Gastrocnemius medialis (tissue), 4 donors: ENCODE measurements at regions of chr10 and their contacts with region 1.

Region 1: DNA sequence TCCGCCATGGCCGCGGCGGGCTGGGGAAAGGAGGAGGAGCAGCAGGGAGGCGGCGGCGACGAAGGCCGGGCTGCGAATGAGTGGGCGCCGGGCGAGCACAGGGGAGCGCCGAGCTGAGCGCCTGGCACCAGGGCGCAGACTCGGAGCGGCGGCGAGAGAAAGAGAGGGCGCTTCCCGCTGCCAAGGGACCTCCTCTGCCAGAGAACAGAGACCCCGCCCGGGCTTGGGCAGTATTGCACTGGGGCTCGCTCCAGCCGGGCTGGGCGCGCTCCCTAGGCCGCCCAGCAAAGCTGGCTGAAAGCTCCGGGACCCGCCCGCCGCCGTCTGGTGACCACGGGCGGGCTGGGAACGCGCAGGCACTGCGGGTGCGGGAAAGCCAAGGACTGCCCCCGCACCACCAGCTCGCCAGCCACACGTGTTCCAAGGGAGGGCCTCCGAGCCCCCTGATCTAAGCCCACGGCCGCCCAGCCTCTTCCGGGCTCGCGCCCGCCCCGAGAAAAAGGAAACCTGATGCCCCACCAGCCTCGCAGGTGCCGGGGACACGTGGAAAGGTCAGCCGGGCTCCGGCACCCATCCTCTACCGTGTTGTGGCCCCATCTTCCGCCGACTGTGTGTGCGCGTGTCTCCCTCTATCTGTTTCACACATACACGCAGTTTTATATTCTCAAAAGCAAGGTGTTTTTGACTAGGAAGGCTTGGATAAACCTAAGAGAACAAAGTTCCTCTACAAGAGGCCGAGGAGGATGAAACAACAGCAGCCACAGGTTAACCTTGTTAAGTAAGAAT is at the start of gene CCDC6:
- DNase-seq: peak; percentile 90 to 92
- ATAC-seq: peak; percentile 86
- H3K4me3 ChIP-seq: peak within 1 kb of the TSS; percentile 81 to 98 (median 92)
- H3K27ac ChIP-seq: peak within 1 kb of the TSS; percentile 89 to 92 (median 90)
- H3K4me1 ChIP-seq: peaks cover 34 to 48% of the 10 kb centered on the region in 2 donors
- H3K27me3 ChIP-seq: no peaks in the 10 kb centered on the region
- CTCF ChIP-seq: peak; percentile 80 to 91 (median 81)
- POLR2A ChIP-seq: peak; percentile 84 to 88
- total RNA-seq, gene CCDC6: 26.6 to 43.3 (median 29.5) TPM

Region 2: GRCh38 chr10:58334817-58335305 is 1571.7 kb before region 1 on chr10 and contains the start of gene UBE2D1:
- in situ Hi-C with region 1: no loop called
- intact Hi-C with region 1: loop called (anchors 2 kb)
- DNase-seq: peak; percentile 90
- ATAC-seq: peak; percentile 63 to 78
- H3K4me3 ChIP-seq: peak within 1 kb of the TSS; percentile 78 to 98 (median 92)
- H3K27ac ChIP-seq: peak within 1 kb of the TSS; percentile 96 to 100 (median 98)
- H3K4me1 ChIP-seq: peaks cover 19 to 34% of the 10 kb centered on the region in 2 donors
- H3K27me3 ChIP-seq: no peaks in the 10 kb centered on the region
- CTCF ChIP-seq: peak in 4 of 5 experiments; percentile 14 to 53 (median 26)
- POLR2A ChIP-seq: peak; percentile 98
- total RNA-seq, gene UBE2D1: 62.0 to 178 (median 81.6) TPM

Region 3: DNA sequence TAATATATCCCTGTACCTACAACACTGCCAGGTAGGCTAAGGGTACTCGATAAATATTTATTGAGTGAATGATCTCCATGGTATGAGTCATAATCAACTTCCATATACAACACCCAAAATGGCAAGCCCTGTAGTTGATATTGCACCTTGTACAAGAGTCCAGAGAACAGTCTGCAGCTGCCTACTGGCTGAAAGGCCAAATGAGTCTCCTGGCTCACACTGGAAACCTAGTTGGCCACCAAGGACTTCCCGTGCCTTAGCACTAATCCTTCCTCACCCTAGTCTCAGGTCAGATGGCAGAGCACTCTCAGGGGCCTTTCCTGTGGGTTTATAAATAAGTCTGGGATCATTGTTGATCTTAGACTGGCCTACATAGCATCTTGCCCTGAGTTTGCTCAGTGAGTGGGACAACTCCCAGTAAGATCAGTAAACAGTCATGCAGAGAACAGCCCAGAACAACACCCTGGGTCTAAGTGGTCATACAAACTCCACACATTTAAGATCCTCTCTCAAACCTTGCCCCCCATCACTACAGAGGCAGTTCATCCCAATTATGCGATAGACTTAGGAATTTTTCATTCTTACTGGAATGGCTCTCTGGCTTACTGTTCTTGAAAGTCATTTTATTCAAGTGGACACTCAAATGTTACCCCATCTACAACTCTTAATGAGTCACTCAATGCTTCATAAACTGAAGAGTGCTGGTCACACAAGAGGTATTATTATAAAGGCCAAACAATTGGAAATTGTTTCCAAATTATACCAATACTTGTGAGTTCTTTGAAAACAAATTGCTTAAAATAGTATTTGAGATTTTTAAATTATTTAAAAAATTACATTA is 182.3 kb before region 1 on chr10:
- in situ Hi-C with region 1: no loop called
- intact Hi-C with region 1: loop called (anchors 5 kb)
- DNase-seq: peak; percentile 83 to 85
- ATAC-seq: peak; percentile 97
- H3K4me3 ChIP-seq: no peak overlapping the region
- H3K27ac ChIP-seq: peak overlapping the region; percentile 75 to 91 (median 80)
- H3K4me1 ChIP-seq: peaks cover 37 to 39% of the 10 kb centered on the region in 2 donors
- H3K27me3 ChIP-seq: no peaks in the 10 kb centered on the region
- CTCF ChIP-seq: no peak
- POLR2A ChIP-seq: peak in 1 of 2 donors; percentile 67

Region 4: GRCh38 chr10:59865101-59865500 is 41.5 kb before region 1 on chr10:
- in situ Hi-C with region 1: loop called in 1 of 4 experiments (anchors 5 kb)
- intact Hi-C with region 1: loop called (anchors 1 kb)
- DNase-seq: peak; percentile 15 to 24
- ATAC-seq: peak; percentile 82 to 93
- H3K4me3 ChIP-seq: no peak overlapping the region
- H3K27ac ChIP-seq: peak overlapping the region; percentile 1 to 61 (median 46)
- H3K4me1 ChIP-seq: peaks cover 11 to 18% of the 10 kb centered on the region in 2 donors
- H3K27me3 ChIP-seq: no peaks in the 10 kb centered on the region
- CTCF ChIP-seq: peak in 2 of 5 experiments; percentile 24 to 26
- POLR2A ChIP-seq: no peak

Region 5: GRCh38 chr10:60032723-60033122 is 126.1 kb after region 1 on chr10:
- in situ Hi-C with region 1: loop called in 1 of 4 experiments (anchors 10 kb)
- intact Hi-C with region 1: loop called (anchors 2 kb)
- DNase-seq: peak; percentile 67 to 81
- ATAC-seq: peak; percentile 91 to 96
- H3K4me3 ChIP-seq: no peak overlapping the region
- H3K27ac ChIP-seq: peak overlapping the region; percentile 83 to 93 (median 87)
- H3K4me1 ChIP-seq: peaks cover 16 to 24% of the 10 kb centered on the region in 2 donors
- H3K27me3 ChIP-seq: no peaks in the 10 kb centered on the region
- CTCF ChIP-seq: peak; percentile 40 to 65 (median 53)
- POLR2A ChIP-seq: no peak